BJ (cell line): ENCODE measurements at regions of chrX and their contacts with region 1.

Region 1: GRCh38 chrX:74371425-74372222 is 49.7 kb upstream of the SLC16A2 start:
- DNase-seq: no peak
- H3K4me3 ChIP-seq: no peak overlapping the region
- H3K27me3 ChIP-seq: peaks cover 2% of the 10 kb centered on the region; the same call in 1 of the 2 replicates
- CTCF ChIP-seq: no peak

Region 2: GRCh38 chrX:74382613-74383012 is 11.0 kb after region 1 on chrX:
- CTCF ChIA-PET with region 1: interaction called, 15 read pairs
- POLR2A ChIA-PET with region 1: no interaction called
- DNase-seq: peak; percentile 29
- H3K4me3 ChIP-seq: no peak overlapping the region
- H3K27me3 ChIP-seq: no peaks in the 10 kb centered on the region
- CTCF ChIP-seq: peak; percentile 82